Caco-2 (cell line): ENCODE measurements at regions of chr1 and their contacts with region 1.

Region 1: GRCh38 chr1:179002552-179003345 is 22.9 kb upstream of the FAM20B start:
- DNase-seq: peak; percentile 83 to 86
- H3K4me3 ChIP-seq: no peak overlapping the region
- H3K4me3 Mint-ChIP-seq: peak overlapping the region; percentile 28
- H3K27ac Mint-ChIP-seq: peak overlapping the region; percentile 77
- H3K4me1 ChIP-seq: peaks cover 9% of the 10 kb centered on the region
- H3K4me1 Mint-ChIP-seq: peaks cover 7% of the 10 kb centered on the region
- H3K27me3 ChIP-seq: no peaks in the 10 kb centered on the region
- H3K27me3 Mint-ChIP-seq: no peaks in the 10 kb centered on the region
- CTCF ChIP-seq: peak; percentile 95 to 98

Region 2: GRCh38 chr1:178774263-178774662 is 228.5 kb before region 1 on chr1:
- CTCF ChIA-PET with region 1: interaction called, 4 read pairs
- POLR2A ChIA-PET with region 1: no interaction called
- intact Hi-C with region 1: loop called (anchors 1 kb)
- DNase-seq: no peak
- H3K4me3 ChIP-seq: no peak overlapping the region
- H3K4me3 Mint-ChIP-seq: no peak overlapping the region
- H3K27ac Mint-ChIP-seq: no peak overlapping the region
- H3K4me1 ChIP-seq: no peaks in the 10 kb centered on the region
- H3K4me1 Mint-ChIP-seq: no peaks in the 10 kb centered on the region
- H3K27me3 ChIP-seq: no peaks in the 10 kb centered on the region
- H3K27me3 Mint-ChIP-seq: no peaks in the 10 kb centered on the region
- CTCF ChIP-seq: peak in 1 of 2 experiments; percentile 1

Region 3: GRCh38 chr1:178789201-178789600 is 213.5 kb before region 1 on chr1:
- CTCF ChIA-PET with region 1: no interaction called
- POLR2A ChIA-PET with region 1: no interaction called
- intact Hi-C with region 1: loop called (anchors 5 kb)
- DNase-seq: no peak
- H3K4me3 ChIP-seq: no peak overlapping the region
- H3K4me3 Mint-ChIP-seq: no peak overlapping the region
- H3K27ac Mint-ChIP-seq: no peak overlapping the region
- H3K4me1 ChIP-seq: peaks cover 9% of the 10 kb centered on the region; the same call in 1 of the 2 replicates
- H3K4me1 Mint-ChIP-seq: peaks cover 9% of the 10 kb centered on the region
- H3K27me3 ChIP-seq: no peaks in the 10 kb centered on the region
- H3K27me3 Mint-ChIP-seq: no peaks in the 10 kb centered on the region
- CTCF ChIP-seq: no peak

Region 4: DNA sequence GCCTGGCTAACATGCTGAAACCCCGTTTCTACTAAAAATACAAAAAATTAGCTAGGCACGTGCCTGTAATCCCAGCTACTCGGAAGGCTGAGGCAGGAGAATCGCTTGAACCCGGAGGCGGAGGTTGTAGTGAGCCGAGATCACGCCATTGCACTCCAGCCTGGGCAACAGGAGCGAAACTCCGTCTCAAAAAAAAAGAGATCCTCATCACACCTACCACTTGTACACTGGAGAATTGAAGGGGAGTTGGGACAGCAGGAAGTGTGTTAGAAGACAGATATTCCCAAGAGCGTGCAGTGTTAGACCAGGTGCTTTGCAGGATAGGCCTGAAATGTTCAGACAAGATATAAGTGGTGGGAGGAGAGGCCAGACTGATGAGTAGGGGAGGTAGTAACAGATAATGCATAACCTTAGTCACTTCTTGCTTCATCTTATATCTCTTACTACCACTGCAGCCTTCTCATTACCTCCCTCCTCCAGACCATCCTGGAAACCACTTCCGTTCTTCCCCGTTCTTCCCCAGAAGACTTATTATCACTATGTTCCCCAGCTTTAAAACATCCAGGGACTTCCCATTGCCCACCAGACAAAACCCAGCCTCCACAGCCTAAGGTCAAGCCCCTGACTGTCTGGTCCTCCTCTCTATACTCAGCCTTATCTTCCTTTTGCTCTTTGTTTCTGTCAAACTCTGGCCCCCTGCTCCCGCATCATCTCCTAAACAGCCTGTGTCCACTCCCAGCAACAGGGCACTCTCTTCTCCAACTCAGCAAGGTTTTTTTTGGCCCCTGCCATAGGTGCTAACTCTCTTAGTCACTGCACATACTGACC is 44.3 kb after region 1 on chr1:
- CTCF ChIA-PET with region 1: no interaction called
- POLR2A ChIA-PET with region 1: no interaction called
- intact Hi-C with region 1: no loop called
- DNase-seq: no peak
- H3K4me3 ChIP-seq: no peak overlapping the region
- H3K4me3 Mint-ChIP-seq: no peak overlapping the region
- H3K27ac Mint-ChIP-seq: no peak overlapping the region
- H3K4me1 ChIP-seq: no peaks in the 10 kb centered on the region
- H3K4me1 Mint-ChIP-seq: no peaks in the 10 kb centered on the region
- H3K27me3 ChIP-seq: no peaks in the 10 kb centered on the region
- H3K27me3 Mint-ChIP-seq: no peaks in the 10 kb centered on the region
- CTCF ChIP-seq: no peak